WTC11 (cell line): ENCODE measurements at regions of chr15 and their contacts with region 1.

Region 1: DNA sequence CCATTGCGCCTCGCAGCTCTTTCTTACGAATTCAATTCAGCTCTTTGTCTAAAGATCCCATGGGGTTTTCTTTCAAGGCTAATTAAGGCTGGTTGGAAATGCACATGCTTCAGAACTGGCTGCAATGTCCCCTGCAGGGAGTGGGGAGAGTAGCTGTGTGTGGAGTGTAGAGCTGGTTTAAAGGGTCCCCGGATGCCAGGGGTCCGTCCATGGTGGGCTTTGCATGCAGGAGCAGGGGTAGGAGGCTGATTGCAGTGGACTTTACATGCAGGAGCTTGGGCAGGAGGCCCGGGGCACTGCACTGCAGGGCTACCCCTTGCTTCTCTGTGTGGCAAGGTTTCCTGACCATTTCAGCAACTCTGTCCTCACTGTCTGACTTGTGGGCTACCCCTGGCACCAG is 261.6 kb upstream of the LYSMD4 start:
- DNase-seq: peak; percentile 18
- ATAC-seq: peak; percentile 79
- H3K4me3 Mint-ChIP-seq: no peak overlapping the region; the same call in 1 of the 2 replicates
- H3K27ac Mint-ChIP-seq: peak overlapping the region; percentile 73
- H3K4me1 Mint-ChIP-seq: peaks cover 34% of the 10 kb centered on the region
- H3K27me3 Mint-ChIP-seq: peaks cover 5% of the 10 kb centered on the region; the same call in 1 of the 2 replicates
- CTCF ChIP-seq: no peak

Region 2: GRCh38 chr15:99845009-99845408 is 149.8 kb before region 1 on chr15:
- CTCF ChIA-PET with region 1: no interaction called
- POLR2A ChIA-PET with region 1: no interaction called
- DNase-seq: no peak
- ATAC-seq: no peak
- H3K4me3 Mint-ChIP-seq: no peak overlapping the region
- H3K27ac Mint-ChIP-seq: no peak overlapping the region
- H3K4me1 Mint-ChIP-seq: peaks cover 9% of the 10 kb centered on the region
- H3K27me3 Mint-ChIP-seq: no peaks in the 10 kb centered on the region
- CTCF ChIP-seq: no peak

Region 3: GRCh38 chr15:99983171-99983885 is 11.5 kb before region 1 on chr15:
- CTCF ChIA-PET with region 1: interaction called, 16 read pairs
- POLR2A ChIA-PET with region 1: interaction called, 6 read pairs
- DNase-seq: peak; percentile 53
- ATAC-seq: peak; percentile 72
- H3K4me3 Mint-ChIP-seq: peak overlapping the region; percentile 50
- H3K27ac Mint-ChIP-seq: peak overlapping the region; percentile 95
- H3K4me1 Mint-ChIP-seq: peaks cover 44% of the 10 kb centered on the region
- H3K27me3 Mint-ChIP-seq: no peaks in the 10 kb centered on the region
- CTCF ChIP-seq: no peak

Region 4: GRCh38 chr15:100033140-100033857 is 38.5 kb after region 1 on chr15:
- CTCF ChIA-PET with region 1: no interaction called
- POLR2A ChIA-PET with region 1: no interaction called
- DNase-seq: no peak
- ATAC-seq: no peak
- H3K4me3 Mint-ChIP-seq: no peak overlapping the region
- H3K27ac Mint-ChIP-seq: no peak overlapping the region
- H3K4me1 Mint-ChIP-seq: no peaks in the 10 kb centered on the region
- H3K27me3 Mint-ChIP-seq: no peaks in the 10 kb centered on the region; the same call in 1 of the 2 replicates
- CTCF ChIP-seq: no peak